Esophagus muscularis mucosa (tissue), 4 donors: ENCODE measurements at regions of chr1 and their contacts with region 1.

Region 1: GRCh38 chr1:25743826-25744581 is 56.0 kb upstream of the SELENON start:
- DNase-seq: peak; percentile 93
- H3K4me3 ChIP-seq: no peak overlapping the region
- H3K27ac ChIP-seq: peak overlapping the region; percentile 87 to 94 (median 88)
- H3K4me1 ChIP-seq: peaks cover 29 to 60% (median 45%) of the 10 kb centered on the region in 4 donors
- H3K27me3 ChIP-seq: no peaks in the 10 kb centered on the region
- CTCF ChIP-seq: peak; percentile 65 to 70 (median 65)
- EP300 ChIP-seq: no peak
- POLR2A ChIP-seq: no peak

Region 2: DNA sequence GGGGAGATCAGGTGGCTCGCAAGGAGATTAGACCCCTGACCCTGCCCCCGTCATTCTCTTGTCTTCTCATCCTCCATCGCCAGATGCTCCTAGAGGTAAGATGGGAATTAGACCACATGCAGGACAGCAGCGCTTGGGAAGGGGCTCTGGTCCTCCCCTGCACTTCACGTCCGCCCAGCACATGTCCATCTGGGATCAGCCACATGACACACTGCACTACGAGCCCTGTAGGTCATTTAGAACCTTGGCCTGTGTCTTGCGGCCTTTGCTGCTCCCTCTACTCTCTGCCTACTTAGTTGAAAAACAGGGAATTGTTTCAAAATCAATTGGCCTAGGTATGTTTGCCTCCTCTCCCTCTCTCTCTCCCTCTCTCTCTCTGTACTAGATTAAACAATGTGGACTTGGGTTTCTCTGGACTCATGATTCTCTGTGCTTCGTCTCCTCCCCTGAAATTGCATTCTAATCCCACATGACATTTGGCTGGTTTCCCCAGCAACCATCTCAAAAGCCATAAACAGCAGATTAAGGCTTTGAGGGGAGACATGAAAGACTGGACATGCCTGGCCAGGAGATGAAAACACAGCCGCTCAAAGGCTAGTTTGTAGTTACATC is 1191.9 kb before region 1 on chr1:
- intact Hi-C with region 1: no loop called
- DNase-seq: no peak
- H3K4me3 ChIP-seq: no peak overlapping the region
- H3K27ac ChIP-seq: no peak overlapping the region
- H3K4me1 ChIP-seq: peaks cover 3 to 14% (median 9%) of the 10 kb centered on the region in 4 donors
- H3K27me3 ChIP-seq: peaks cover 0 to 54% (median 17%) of the 10 kb centered on the region in 4 donors
- CTCF ChIP-seq: no peak
- EP300 ChIP-seq: no peak
- POLR2A ChIP-seq: no peak

Region 3: GRCh38 chr1:25253911-25254310 is 490.1 kb before region 1 on chr1:
- intact Hi-C with region 1: no loop called
- DNase-seq: no peak
- H3K4me3 ChIP-seq: no peak overlapping the region
- H3K27ac ChIP-seq: no peak overlapping the region
- H3K4me1 ChIP-seq: no peaks in the 10 kb centered on the region
- H3K27me3 ChIP-seq: no peaks in the 10 kb centered on the region
- CTCF ChIP-seq: no peak
- EP300 ChIP-seq: no peak
- POLR2A ChIP-seq: no peak

Region 4: DNA sequence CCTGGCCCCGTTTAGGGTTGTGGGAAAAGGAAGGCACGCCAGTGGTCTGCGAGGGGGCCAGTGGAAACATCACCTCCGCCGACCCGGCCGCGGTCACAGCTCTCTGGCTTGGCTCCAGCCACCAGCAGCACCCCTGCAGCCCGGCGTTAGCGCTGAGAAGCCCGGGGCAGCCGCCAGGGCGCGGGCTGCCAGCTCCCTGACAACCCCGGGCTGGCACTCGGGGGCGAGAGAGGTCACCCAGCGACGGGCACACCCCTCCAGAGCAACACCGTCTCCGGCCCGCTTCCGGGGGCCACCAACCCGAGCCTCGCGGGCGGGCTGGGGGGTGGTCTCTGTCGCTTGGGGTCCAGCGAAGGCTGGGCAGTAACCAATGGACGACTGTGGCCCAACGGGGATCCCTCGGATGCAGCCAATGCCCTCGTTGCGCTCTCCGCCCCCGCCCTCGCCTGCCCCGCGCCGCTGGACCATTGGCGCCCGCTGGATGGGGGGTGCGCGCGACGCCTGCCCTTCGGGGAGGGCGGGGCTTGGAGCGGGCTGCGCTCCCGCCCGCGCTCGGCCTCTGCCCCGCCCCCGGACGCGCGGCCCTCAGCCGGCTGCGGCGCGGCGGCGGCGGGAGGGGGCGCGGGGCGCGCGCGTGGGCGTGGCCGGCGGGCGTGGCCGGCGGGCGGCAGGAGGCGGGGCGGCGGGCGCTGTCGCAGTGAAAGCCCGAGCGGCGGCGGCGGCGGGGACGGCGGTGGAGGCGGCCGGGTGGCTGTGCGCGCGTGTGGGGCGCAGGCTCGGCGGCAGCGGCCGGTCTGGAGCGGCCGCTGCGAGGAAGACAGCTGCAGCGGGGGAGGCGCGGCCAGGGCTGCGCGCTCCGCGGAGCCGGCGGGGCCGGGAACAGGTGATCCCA is 127.7 kb before region 1 on chr1 and contains the start of gene MAN1C1:
- intact Hi-C with region 1: loop called (anchors 5 kb)
- DNase-seq: peak; percentile 96
- H3K4me3 ChIP-seq: peak within 1 kb of the TSS; percentile 71 to 98 (median 96)
- H3K27ac ChIP-seq: peak within 1 kb of the TSS; percentile 86 to 90 (median 89)
- H3K4me1 ChIP-seq: peaks cover 40 to 54% (median 51%) of the 10 kb centered on the region in 4 donors
- H3K27me3 ChIP-seq: no peaks in the 10 kb centered on the region
- CTCF ChIP-seq: peak; percentile 44 to 66 (median 58)
- EP300 ChIP-seq: no peak
- POLR2A ChIP-seq: no peak
- total RNA-seq, gene MAN1C1: 20.2 to 22.8 (median 20.7) TPM